ENCODE measurements at regions of chr5 and their contacts with region 1.

Region 1: GRCh38 chr5:141040771-141041426 is 10.3 kb upstream of the PCDHB1 start:
- ATAC-seq: peak; percentile 55 to 93 (median 88)
- H3K4me3 ChIP-seq: peak overlapping the region; percentile 51 to 71 (median 63)
- H3K27ac ChIP-seq: peak overlapping the region; percentile 98 to 99
- H3K4me1 ChIP-seq: peaks cover 0 to 8% of the 10 kb centered on the region in 2 donors

Region 2: DNA sequence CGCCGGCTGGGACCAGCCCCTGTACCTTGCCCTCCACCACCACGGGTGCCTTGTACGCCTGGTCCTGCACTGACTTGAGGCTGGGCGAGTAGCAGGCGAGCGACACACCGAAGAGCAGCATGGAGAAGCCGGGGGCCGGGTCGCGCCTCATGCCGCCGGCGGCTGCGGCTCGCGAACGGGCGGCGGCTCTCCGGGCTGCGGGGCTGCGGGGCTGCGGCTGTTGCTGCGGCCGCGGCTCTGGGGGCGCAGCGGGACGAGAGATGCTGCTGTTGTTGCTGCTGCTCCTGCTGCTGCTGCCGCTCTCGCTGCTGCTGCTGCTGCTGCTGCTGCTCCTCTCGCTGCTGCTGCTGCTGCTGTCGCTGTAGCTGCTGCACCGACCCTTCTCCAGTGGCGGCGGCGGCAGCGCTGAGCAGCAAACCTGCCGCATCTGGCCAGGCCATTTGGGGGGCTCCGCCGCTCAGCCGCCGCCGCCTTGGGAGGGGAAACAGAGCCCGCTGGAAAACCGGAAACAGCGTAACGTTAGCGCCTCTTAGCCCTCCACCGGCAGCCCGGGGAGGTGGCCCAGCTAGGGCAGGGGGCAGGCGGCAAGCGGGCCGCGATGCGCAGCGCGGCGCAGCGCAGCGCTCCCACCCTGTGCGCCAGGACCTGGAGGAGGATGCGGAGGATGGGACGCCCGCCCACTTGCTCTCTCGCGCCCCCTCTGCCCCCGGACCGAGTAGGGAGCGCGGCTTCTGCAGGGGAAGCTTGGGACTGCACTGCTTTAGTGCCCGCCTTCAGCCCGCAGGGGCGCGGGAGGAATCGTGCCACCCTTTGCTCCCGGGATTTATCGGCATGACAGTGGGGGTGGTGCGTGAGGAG is 998.0 kb before region 1 on chr5 and contains the start of gene NRG2:
- in situ Hi-C with region 1: no loop called
- ATAC-seq: peak; percentile 73 to 97 (median 93)
- H3K4me3 ChIP-seq: peak within 1 kb of the TSS; percentile 44 to 56 (median 52)
- H3K27ac ChIP-seq: no peak within 1 kb of the TSS
- H3K4me1 ChIP-seq: peaks cover 4 to 6% of the 10 kb centered on the region in 2 donors
- total RNA-seq, gene NRG2: 0.28 to 1.8 (median 0.71) TPM in 7 of 8 experiments, not detected in the other

Region 3: GRCh38 chr5:140806834-140807775 is 233.8 kb before region 1 on chr5 and contains the start of gene PCDHA4:
- in situ Hi-C with region 1: loop called in 2 of 9 experiments (anchors 5 to 25 kb)
- ATAC-seq: peak in 7 of 8 experiments; percentile 71 to 98 (median 88)
- H3K4me3 ChIP-seq: peak within 1 kb of the TSS; percentile 50 to 88 (median 76)
- H3K27ac ChIP-seq: peak within 1 kb of the TSS; percentile 85 to 89
- H3K4me1 ChIP-seq: no peaks in the 10 kb centered on the region
- total RNA-seq, gene PCDHA4: 0.05 to 50.8 (median 14.1) TPM

Region 4: GRCh38 chr5:140868721-140869554 is 172.0 kb before region 1 on chr5 and contains the start of gene PCDHA11:
- in situ Hi-C with region 1: loop called in 3 of 9 experiments (anchors 5 to 25 kb)
- ATAC-seq: peak in 4 of 8 experiments; percentile 59 to 99 (median 71)
- H3K4me3 ChIP-seq: peak within 1 kb of the TSS in 4 of 5 donors; percentile 5 to 52 (median 24)
- H3K27ac ChIP-seq: peak within 1 kb of the TSS in 1 of 2 donors; percentile 85
- H3K4me1 ChIP-seq: no peaks in the 10 kb centered on the region
- total RNA-seq, gene PCDHA11: 0.31 to 6.3 (median 5.2) TPM in 7 of 8 experiments, not detected in the other

Region 5: GRCh38 chr5:140875066-140876065 is 165.5 kb before region 1 on chr5 and contains the start of gene PCDHA12:
- in situ Hi-C with region 1: loop called in 4 of 9 experiments (anchors 5 to 25 kb)
- ATAC-seq: peak in 4 of 8 experiments; percentile 61 to 84 (median 68)
- H3K4me3 ChIP-seq: peak within 1 kb of the TSS in 4 of 5 donors; percentile 42 to 69 (median 52)
- H3K27ac ChIP-seq: peak within 1 kb of the TSS in 1 of 2 donors; percentile 79
- H3K4me1 ChIP-seq: no peaks in the 10 kb centered on the region
- total RNA-seq, gene PCDHA12: 0.13 to 22.5 (median 7.4) TPM in 7 of 8 experiments, not detected in the other

Region 6: DNA sequence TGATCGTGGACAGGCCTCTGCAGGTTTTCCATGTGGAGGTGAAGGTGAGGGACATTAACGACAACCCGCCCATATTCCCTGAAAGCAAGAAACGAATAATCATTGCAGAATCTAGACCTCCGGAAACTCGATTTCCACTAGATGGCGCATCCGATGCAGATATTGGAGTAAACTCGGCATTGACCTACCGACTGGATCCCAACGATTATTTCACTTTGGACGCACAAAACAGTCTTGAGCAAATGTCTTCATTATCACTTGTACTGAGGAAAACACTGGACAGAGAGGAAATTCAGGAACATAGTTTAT is 158.4 kb before region 1 on chr5:
- in situ Hi-C with region 1: loop called in 2 of 9 experiments (anchors 10 to 25 kb)
- ATAC-seq: peak in 3 of 8 experiments; percentile 59 to 69 (median 66)
- H3K4me3 ChIP-seq: peak overlapping the region in 3 of 5 donors; percentile 29 to 59 (median 49)
- H3K27ac ChIP-seq: peak overlapping the region in 1 of 2 donors; percentile 62
- H3K4me1 ChIP-seq: no peaks in the 10 kb centered on the region

Region 7: DNA sequence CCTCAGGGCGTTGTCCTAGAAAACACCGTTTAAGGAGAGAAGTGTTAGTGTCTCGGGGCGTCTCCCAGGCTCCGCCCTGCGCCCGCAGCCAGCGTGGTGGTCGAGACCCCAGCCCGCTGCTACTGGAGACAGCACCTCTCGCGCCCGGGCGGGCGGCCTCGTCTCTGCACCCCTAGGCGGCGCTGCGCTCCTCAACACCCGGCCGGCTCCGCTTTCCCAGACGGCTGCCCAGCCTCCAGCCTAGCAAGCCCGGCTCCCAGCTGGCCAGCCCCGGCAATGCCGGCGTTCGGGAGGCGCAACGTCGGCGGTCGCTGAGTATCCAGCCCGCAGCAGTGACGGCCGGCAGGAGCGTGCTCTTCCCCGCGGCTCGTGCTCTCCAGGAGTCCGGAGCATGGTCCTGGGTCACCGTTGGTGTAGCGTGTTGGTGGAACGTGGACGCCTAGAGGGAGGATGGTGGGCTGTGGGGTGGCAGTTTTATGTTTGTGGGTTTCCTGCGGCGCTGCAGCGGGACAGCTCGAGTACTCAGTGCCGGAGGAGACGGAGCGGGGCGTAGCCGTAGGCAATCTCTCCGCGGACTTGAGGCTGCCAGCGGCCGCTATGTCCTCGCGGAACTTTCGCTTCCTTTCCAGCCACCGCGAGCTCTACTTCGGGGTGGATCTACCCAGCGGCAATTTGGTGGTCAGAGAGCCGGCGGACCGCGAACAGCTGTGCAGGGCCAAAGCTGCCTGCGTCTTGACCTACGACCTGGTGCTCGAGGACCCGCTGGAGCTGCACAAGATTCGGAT is 114.3 kb before region 1 on chr5:
- in situ Hi-C with region 1: loop called in 1 of 9 experiments (anchors 25 kb)
- ATAC-seq: peak; percentile 25 to 98 (median 96)
- H3K4me3 ChIP-seq: peak overlapping the region; percentile 25 to 56 (median 42)
- H3K27ac ChIP-seq: peak overlapping the region in 1 of 2 donors; percentile 45
- H3K4me1 ChIP-seq: peaks cover 0 to 4% of the 10 kb centered on the region in 2 donors